ENCODE measurements at regions of chr6 and their contacts with region 1.

Region 1: DNA sequence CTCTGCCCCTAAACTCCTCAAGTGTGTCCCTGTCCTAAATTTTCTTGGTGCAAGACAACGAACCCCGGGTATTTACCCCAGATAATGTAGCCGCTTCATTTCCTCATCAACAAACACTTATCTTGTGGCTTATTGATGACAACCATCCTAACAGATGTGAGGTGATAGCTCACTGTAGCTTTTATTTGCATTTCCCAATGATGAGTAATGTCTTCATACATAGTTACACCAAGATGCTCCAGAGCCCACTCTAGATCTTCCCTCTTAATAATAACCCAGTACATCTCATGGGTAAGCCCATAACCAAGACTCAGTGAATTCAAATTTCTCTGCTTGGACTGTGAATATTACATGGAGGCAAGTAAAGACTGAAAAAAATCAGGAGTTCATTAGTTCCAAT is 48.2 kb upstream of the BEND6 start:
- DNase-seq: no peak
- ATAC-seq: no peak

Region 2: GRCh38 chr6:55643861-55644260 is 1262.9 kb before region 1 on chr6:
- intact Hi-C with region 1: no loop called
- DNase-seq: no peak
- ATAC-seq: no peak

Region 3: DNA sequence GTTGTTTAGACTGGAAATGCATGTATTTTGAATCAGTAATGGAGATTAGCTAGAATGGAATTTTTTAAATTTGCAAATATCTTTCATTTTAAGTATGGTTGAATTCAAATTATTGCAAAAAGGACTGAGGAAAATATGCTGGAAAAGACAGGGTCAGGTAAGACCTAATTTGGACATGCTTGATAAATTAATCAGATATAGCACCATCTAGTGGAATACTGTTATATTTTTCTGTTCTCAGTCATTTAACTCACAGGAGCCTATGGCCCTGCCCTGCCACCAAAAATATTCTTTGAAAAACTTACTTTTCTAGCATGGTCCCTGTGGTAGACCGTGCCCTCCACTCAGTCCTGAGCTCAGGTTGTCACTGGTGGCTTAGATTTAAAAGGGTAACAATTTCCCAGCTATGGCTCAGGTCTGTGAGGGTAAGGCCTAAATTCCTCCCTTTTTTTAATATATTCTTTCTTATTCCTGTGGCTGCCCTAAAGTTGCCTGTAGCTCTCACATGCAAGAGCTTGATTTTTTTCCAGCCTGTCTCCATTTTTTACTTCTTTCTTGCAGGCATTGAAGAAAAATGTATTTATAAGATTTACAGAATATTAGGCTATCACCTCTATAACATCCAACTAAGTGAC is 114.5 kb after region 1 on chr6:
- intact Hi-C with region 1: loop called (anchors 5 kb)
- DNase-seq: no peak
- ATAC-seq: peak; percentile 65

Measured in Right ventricle myocardium superior (tissue), 1 donor.